ENCODE measurements at regions of chr10 and their contacts with region 1.

Region 1: DNA sequence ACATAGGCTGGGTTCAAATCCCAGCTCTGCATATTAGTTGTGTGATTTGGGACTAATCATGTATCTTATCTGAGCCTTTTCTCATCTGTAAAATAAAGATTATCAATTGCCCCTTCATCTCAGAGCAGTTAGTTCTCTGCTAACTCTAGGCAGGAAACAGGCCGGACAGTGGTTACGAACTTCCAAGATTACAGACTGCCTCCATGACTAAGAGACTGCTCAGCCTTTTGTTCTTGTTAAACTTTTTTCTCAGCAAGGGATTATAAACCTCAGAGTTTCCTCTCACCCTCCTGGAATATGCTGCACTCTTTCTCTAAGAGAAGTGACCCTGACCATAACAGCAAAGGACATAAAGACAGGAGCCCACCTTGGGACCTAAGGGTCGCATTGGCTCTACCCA is 52.5 kb upstream of the NFKB2 start:
- DNase-seq: no peak
- H3K4me3 Mint-ChIP-seq: no peak overlapping the region
- H3K27ac Mint-ChIP-seq: no peak overlapping the region
- H3K4me1 Mint-ChIP-seq: peaks cover 31% of the 10 kb centered on the region
- H3K27me3 Mint-ChIP-seq: no peaks in the 10 kb centered on the region

Region 2: DNA sequence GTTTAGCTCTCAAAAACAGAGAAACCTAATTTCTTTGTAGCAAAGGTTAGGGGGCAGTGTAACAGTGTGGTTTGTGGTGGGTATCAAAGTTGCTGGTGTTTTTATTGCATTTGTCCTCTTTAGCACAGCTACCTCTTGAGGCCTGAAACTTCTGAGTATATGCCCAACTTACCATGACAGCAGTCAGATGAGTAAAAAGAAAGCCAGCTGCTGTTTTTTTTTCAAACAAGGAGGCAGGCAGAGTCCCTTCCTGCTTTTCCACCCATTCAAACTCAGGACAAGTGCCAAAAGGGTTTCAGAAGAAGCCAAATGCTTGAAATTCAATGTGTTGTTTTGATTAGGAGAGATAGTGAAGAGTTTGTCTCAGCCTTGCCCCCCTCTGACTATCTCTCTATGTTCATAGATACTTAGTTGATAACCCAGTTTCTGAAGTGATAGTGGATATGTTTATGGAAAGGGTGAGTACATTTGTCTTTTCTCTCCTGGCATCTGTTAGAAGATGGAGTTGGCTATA is 74.5 kb before region 1 on chr10:
- CTCF ChIA-PET with region 1: interaction called, 7 read pairs
- intact Hi-C with region 1: loop called (anchors 1 kb)
- DNase-seq: no peak
- H3K4me3 Mint-ChIP-seq: no peak overlapping the region
- H3K27ac Mint-ChIP-seq: peak overlapping the region; percentile 87
- H3K4me1 Mint-ChIP-seq: peaks cover 65% of the 10 kb centered on the region
- H3K27me3 Mint-ChIP-seq: no peaks in the 10 kb centered on the region

Measured in activated naive CD4-positive, alpha-beta T cell treated with anti-CD3 and anti-CD28 coated beads for 36 hours (primary cell).